MCF 10A (cell line): ENCODE measurements at regions of chr7 and their contacts with region 1.

Region 1: DNA sequence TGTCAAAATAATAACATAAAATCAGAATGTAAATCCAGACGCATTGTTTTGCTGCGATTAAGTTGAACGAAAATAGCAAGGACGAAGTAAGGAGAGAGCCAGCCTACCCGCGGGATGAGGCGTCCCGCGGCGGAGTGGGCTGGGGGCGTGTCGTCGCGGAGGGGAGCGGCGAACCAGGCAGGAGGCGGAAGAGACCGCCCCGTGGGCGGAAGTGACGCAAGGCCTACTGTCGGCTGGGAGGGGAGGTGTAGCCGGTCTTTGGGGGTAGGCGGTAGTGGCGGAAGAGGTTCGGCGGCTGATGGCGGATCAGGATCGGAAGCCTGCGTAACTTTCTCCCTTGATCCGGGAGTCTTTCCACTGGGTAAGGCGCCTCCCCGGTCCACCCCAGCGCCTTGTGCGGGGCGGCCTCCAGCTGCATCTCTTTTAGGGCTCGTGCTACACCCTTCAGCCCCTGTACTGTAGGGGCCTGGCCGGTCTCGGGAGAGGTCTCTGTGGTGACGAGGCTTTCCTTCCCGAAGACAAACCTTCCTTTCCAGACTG is at the start of gene TAX1BP1:
- DNase-seq: peak; percentile 93
- H3K4me3 Mint-ChIP-seq: peak within 1 kb of the TSS; percentile 86
- H3K27ac Mint-ChIP-seq: peak within 1 kb of the TSS; percentile 99
- H3K4me1 Mint-ChIP-seq: peaks cover 22% of the 10 kb centered on the region
- H3K27me3 Mint-ChIP-seq: no peaks in the 10 kb centered on the region
- CTCF ChIP-seq: no peak
- total RNA-seq, gene TAX1BP1: 95.0 and 95.9 TPM in 2 replicates

Region 2: GRCh38 chr7:27611043-27611442 is 128.9 kb before region 1 on chr7:
- CTCF ChIA-PET with region 1: interaction called, 7 read pairs
- POLR2A ChIA-PET with region 1: interaction called, 24 read pairs
- intact Hi-C with region 1: no loop called
- DNase-seq: peak; percentile 80
- H3K4me3 Mint-ChIP-seq: no peak overlapping the region
- H3K27ac Mint-ChIP-seq: no peak overlapping the region
- H3K4me1 Mint-ChIP-seq: peaks cover 26% of the 10 kb centered on the region
- H3K27me3 Mint-ChIP-seq: no peaks in the 10 kb centered on the region
- CTCF ChIP-seq: no peak

Region 3: GRCh38 chr7:27647052-27647451 is 92.9 kb before region 1 on chr7:
- CTCF ChIA-PET with region 1: interaction called, 3 read pairs
- POLR2A ChIA-PET with region 1: interaction called, 94 read pairs
- intact Hi-C with region 1: no loop called
- DNase-seq: peak; percentile 95
- H3K4me3 Mint-ChIP-seq: peak overlapping the region; percentile 59
- H3K27ac Mint-ChIP-seq: peak overlapping the region; percentile 91
- H3K4me1 Mint-ChIP-seq: peaks cover 44% of the 10 kb centered on the region
- H3K27me3 Mint-ChIP-seq: no peaks in the 10 kb centered on the region
- CTCF ChIP-seq: no peak

Region 4: GRCh38 chr7:27689591-27690164 is 50.3 kb before region 1 on chr7:
- CTCF ChIA-PET with region 1: interaction called, 4 read pairs
- POLR2A ChIA-PET with region 1: interaction called, 14 read pairs
- intact Hi-C with region 1: no loop called
- DNase-seq: peak; percentile 37
- H3K4me3 Mint-ChIP-seq: no peak overlapping the region
- H3K27ac Mint-ChIP-seq: no peak overlapping the region
- H3K4me1 Mint-ChIP-seq: no peaks in the 10 kb centered on the region
- H3K27me3 Mint-ChIP-seq: no peaks in the 10 kb centered on the region
- CTCF ChIP-seq: no peak

Region 5: DNA sequence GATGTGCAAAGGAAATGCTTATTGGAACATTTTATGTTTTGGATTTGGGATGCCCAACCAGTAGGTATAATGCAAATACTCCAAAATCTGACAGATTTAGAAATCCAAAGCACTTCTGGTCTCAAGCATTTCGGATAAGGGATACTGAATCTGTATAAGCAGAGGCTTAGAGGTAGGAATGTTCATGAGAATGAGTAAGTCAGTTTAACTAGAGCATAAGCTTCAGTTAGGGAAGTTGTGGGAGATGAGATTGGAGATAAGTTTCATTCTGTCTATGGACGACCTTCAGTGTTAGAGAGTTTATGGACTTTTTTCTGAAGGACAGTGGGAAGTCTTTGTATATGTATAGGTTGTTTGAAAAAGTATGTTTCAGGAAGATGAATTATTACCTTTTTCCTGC is 10.3 kb after region 1 on chr7:
- CTCF ChIA-PET with region 1: no interaction called
- POLR2A ChIA-PET with region 1: interaction called, 11 read pairs
- intact Hi-C with region 1: no loop called
- DNase-seq: no peak
- H3K4me3 Mint-ChIP-seq: no peak overlapping the region
- H3K27ac Mint-ChIP-seq: no peak overlapping the region
- H3K4me1 Mint-ChIP-seq: peaks cover 20% of the 10 kb centered on the region
- H3K27me3 Mint-ChIP-seq: no peaks in the 10 kb centered on the region
- CTCF ChIP-seq: no peak

Region 6: DNA sequence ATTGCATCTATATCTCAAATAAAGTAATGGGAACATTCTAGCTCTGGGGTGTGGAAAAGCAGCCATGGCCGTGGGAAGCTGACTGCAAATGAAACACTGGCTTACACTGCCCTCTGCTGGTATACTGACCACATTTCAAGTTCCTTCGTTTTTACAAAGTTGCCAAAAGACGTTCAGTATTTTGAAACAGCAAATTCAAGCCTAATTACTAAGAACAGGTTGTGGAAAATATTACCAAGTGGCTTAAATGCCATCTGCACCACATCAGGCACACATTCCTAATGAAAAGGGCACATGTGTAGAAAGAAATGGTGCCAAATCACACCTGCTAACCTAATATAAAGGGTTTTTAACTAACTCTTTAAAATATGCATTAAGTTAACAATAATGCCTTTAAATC is 356.7 kb after region 1 on chr7:
- CTCF ChIA-PET with region 1: interaction called, 7 read pairs
- POLR2A ChIA-PET with region 1: interaction called, 3 read pairs
- intact Hi-C with region 1: loop called (anchors 10 kb)
- DNase-seq: peak; percentile 69
- H3K4me3 Mint-ChIP-seq: no peak overlapping the region
- H3K27ac Mint-ChIP-seq: no peak overlapping the region
- H3K4me1 Mint-ChIP-seq: no peaks in the 10 kb centered on the region
- H3K27me3 Mint-ChIP-seq: no peaks in the 10 kb centered on the region
- CTCF ChIP-seq: peak; percentile 70